GM13976 (cell line): ENCODE measurements at regions of chr15 and their contacts with region 1.

Region 1: DNA sequence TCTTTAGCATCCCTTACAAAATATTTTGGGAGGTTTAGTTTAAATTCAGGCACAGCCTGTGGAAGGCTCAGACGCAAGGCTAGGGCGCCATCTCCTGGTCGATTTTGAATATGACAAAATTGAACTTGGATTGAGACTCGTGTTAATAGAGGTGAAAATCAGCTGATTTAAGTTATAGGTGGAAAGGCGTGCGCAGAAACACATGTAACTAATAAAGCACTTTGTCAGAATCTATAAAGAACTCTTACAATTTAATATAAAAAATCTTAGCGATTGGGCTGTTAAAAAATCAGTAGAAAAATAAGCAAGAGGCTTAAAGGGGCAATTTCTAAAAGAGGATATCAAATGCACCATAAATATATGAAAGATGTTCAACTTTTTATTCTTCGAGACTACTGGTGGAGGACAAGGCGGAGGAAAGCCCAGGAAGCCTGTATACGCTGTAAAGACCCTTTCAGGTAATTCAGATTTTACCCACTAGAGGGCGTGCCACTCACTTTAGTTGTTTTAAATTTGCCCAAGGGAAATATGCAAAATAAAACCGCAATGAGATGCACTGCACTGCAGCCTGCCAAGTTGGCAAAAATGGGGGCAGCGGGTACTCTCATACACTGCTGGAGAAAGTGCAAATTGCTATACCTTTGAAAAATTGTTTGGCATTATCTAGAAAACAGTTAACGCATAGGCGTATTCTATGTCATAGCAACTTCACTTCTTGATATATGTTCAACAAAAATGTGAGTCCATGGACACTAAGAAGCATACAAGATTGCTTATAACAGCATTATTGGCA is 64.7 kb downstream of the SLC30A4 start:
- DNase-seq: peak; percentile 77
- CTCF ChIP-seq: peak; percentile 64

Region 2: DNA sequence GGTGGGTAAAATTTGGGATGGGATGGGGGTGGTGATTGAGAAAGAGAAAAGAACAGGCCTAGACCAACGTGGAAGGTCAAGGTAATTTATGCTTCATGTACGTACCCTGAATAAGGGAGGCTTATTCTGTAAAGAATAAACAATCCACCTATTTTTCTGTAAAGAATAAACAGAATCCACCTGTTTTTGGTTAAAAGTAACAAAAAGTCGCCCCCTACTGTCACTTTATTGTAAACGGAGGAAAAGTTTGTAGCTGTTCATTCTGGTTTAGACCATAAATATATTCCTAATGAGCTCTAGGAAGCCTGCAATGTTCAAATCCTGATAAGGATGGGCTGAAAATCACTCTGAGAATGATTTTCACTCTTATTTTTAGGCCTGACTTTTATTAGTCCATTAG is 153.5 kb after region 1 on chr15:
- in situ Hi-C with region 1: loop called (anchors 10 kb)
- DNase-seq: peak; percentile 33
- CTCF ChIP-seq: peak; percentile 36